ENCODE measurements at regions of chr3 and their contacts with region 1.

Region 1: DNA sequence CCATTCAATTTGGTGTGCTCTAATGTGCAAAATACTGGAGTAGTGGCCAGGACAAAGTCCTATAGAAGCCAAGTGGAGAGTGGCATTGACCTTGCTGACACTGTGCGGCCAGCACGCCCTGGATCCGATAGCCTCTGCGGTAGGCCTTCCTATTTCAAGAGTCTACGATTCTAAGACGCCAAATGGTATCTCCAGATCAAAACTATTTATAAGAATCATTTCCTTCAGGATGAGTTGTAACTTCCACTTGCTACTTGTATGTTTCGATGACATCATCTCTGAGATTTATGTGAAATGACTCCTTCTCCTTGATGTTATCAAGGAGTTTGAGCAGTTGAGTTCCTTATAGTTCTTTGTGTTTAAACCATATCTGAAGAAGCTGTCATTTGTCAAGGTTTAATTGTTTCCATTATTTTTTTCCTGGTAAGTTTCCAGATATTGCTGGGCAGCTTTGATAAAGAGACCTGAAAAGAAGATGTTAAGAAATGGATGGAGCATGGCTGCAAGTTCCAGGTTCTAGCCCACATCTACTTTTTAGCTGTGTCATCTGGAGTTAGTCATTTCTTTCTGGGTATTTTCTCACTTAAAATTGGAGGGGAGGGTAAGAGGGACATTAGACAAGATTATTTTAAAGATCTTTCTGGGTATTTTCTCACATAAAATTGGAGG is 71.8 kb downstream of the TMEM44 start:
- DNase-seq: peak; percentile 69 to 96
- H3K4me3 ChIP-seq: no peak overlapping the region
- H3K27ac ChIP-seq: peak overlapping the region; percentile 69
- H3K4me1 ChIP-seq: peaks cover 17% of the 10 kb centered on the region
- H3K27me3 ChIP-seq: no peaks in the 10 kb centered on the region
- CTCF ChIP-seq: no peak

Region 2: GRCh38 chr3:194141415-194142155 is 419.9 kb before region 1 on chr3:
- CTCF ChIA-PET with region 1: no interaction called
- POLR2A ChIA-PET with region 1: no interaction called
- intact Hi-C with region 1: no loop called
- DNase-seq: peak; percentile 97
- H3K4me3 ChIP-seq: peak overlapping the region; percentile 46; the same call in 1 of the 2 replicates
- H3K27ac ChIP-seq: peak overlapping the region; percentile 99
- H3K4me1 ChIP-seq: peaks cover 65% of the 10 kb centered on the region
- H3K27me3 ChIP-seq: no peaks in the 10 kb centered on the region
- CTCF ChIP-seq: 0 out of 2 replicates have a peak, but pooled peaks have one; percentile 37

Region 3: DNA sequence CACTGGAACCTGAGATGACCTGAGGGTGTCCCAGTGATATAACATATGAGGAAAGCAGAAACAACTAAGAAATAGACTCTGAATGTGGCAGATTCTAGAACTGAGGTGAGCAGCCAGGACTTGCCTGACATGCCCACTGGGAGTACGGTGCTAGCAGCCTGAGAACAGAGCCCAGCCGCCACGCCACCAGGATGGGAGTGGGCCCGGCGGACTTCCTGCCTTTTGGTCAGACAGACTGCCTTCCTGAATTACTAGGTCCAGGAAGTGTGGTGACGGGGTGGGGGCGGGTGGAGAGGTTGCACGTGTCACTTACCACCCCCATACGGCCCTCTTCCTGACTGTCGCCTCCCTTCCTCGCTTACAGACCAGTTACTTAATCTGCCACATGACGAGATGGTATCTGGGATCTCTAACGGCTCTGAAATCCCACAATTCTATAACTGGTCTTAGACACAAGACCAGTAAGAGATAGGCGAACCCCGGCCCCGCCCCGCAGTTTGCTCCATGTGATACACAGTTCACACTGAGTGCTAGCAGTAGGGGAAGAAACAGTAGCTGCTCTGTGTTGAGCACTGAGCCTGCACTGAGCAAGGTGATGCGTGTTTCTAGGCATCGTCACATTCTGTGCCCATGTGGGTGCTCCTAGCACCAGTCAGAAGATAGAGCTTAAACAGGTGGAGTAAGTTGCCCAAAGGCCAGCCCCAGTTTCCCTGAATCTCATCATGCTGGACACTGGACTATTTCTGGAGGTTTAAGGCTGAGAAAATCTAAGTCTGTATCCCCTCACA is 306.0 kb before region 1 on chr3:
- CTCF ChIA-PET with region 1: no interaction called
- POLR2A ChIA-PET with region 1: no interaction called
- intact Hi-C with region 1: no loop called
- DNase-seq: no peak
- H3K4me3 ChIP-seq: no peak overlapping the region
- H3K27ac ChIP-seq: no peak overlapping the region
- H3K4me1 ChIP-seq: 0 out of 2 replicates have a peak, but pooled peaks cover 3% of the 10 kb centered on the region
- H3K27me3 ChIP-seq: no peaks in the 10 kb centered on the region
- CTCF ChIP-seq: no peak

Region 4: GRCh38 chr3:195099976-195100785 is 538.7 kb after region 1 on chr3:
- CTCF ChIA-PET with region 1: no interaction called
- POLR2A ChIA-PET with region 1: interaction called, 10 read pairs
- intact Hi-C with region 1: no loop called
- DNase-seq: no peak
- H3K4me3 ChIP-seq: no peak overlapping the region
- H3K27ac ChIP-seq: no peak overlapping the region
- H3K4me1 ChIP-seq: peaks cover 41% of the 10 kb centered on the region
- H3K27me3 ChIP-seq: no peaks in the 10 kb centered on the region
- CTCF ChIP-seq: no peak

Measured in PC-9 (cell line).